OCI-LY7 (cell line): ENCODE measurements at regions of chr1 and their contacts with region 1.

Region 1: GRCh38 chr1:24491577-24492360 is 10.9 kb upstream of the RCAN3 start:
- DNase-seq: no peak
- H3K4me3 ChIP-seq: no peak overlapping the region
- H3K27ac ChIP-seq: no peak overlapping the region
- H3K4me1 ChIP-seq: peaks cover 7% of the 10 kb centered on the region
- CTCF ChIP-seq: no peak

Region 2: GRCh38 chr1:24481101-24481500 is 10.7 kb before region 1 on chr1:
- CTCF ChIA-PET with region 1: no interaction called
- POLR2A ChIA-PET with region 1: interaction called, 10 read pairs
- intact Hi-C with region 1: no loop called
- DNase-seq: peak; percentile 80
- H3K4me3 ChIP-seq: peak overlapping the region; percentile 25
- H3K27ac ChIP-seq: peak overlapping the region; percentile 60
- H3K4me1 ChIP-seq: peaks cover 25% of the 10 kb centered on the region
- CTCF ChIP-seq: no peak